CD4-positive, alpha-beta memory T cell (primary cell): ENCODE measurements at regions of chr12 and their contacts with region 1.

Region 1: GRCh38 chr12:53352331-53353256 is 16.4 kb upstream of the SP7 start:
- DNase-seq: peak; percentile 82 to 84 (median 84)
- H3K4me3 ChIP-seq: no peak overlapping the region
- H3K4me3 Mint-ChIP-seq: peak overlapping the region in 2 of 8 donors; percentile 1 to 7
- H3K27ac ChIP-seq: no peak overlapping the region
- H3K27ac Mint-ChIP-seq: peak overlapping the region in 4 of 7 donors; percentile 1 to 70 (median 26)
- H3K4me1 ChIP-seq: no peaks in the 10 kb centered on the region
- H3K4me1 Mint-ChIP-seq: peaks cover 4 to 7% (median 6%) of the 10 kb centered on the region in 4 donors
- H3K27me3 ChIP-seq: no peaks in the 10 kb centered on the region
- H3K27me3 Mint-ChIP-seq: no peaks in the 10 kb centered on the region

Region 2: GRCh38 chr12:53336181-53336681 is 16.4 kb before region 1 on chr12 and contains the start of gene SP7:
- CTCF ChIA-PET with region 1: interaction called, 11 read pairs
- POLR2A ChIA-PET with region 1: no interaction called
- intact Hi-C with region 1: no loop called
- DNase-seq: no peak
- H3K4me3 ChIP-seq: no peak within 1 kb of the TSS
- H3K4me3 Mint-ChIP-seq: peak within 1 kb of the TSS in 1 of 8 donors; percentile 6
- H3K27ac ChIP-seq: no peak within 1 kb of the TSS
- H3K27ac Mint-ChIP-seq: peak within 1 kb of the TSS in 1 of 7 donors; percentile 11
- H3K4me1 ChIP-seq: no peaks in the 10 kb centered on the region
- H3K4me1 Mint-ChIP-seq: peaks cover 0 to 7% (median 2%) of the 10 kb centered on the region in 4 donors
- H3K27me3 ChIP-seq: peaks cover 22% of the 10 kb centered on the region
- H3K27me3 Mint-ChIP-seq: peaks cover 21 to 52% of the 10 kb centered on the region in 2 donors
- total RNA-seq, gene SP7: not detected

Region 3: DNA sequence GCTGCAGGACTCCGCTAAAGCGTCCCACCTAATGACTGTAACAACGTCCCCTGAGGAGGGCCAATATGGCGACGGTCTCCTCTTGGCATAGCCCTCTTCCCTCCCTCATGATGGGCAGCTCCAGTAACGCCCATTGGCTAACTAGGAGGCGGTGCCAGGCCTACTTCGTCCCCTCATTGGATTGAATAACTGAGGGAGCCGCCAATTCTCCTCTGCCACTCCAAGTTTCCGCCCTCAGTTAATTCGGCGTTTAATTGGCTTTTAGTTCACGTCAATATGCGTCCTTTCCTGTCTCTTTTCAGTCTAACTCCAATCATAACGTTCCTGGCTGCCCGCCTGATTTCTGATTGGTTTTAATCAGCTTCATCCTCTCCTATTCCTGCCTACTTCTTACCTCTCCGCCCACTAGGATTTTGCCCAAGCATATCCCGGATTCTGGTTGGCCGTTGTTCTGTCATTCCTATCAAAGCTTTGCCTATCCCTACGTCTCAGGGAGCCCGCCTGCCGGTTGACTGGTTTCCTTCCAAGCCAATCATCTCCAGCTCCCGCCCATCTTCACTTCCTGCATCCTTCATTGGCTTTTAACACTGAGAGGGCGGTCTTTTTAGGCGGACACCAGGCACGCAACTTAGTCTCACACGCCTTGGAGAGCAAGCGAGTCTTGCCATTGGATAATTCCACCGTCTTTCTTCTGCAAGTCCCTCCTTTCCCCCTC is 27.0 kb after region 1 on chr12:
- CTCF ChIA-PET with region 1: interaction called, 63 read pairs
- POLR2A ChIA-PET with region 1: interaction called, 22 read pairs
- intact Hi-C with region 1: loop called (anchors 1 kb)
- DNase-seq: peak; percentile 99 to 100 (median 100)
- H3K4me3 ChIP-seq: peak overlapping the region; percentile 57 to 86
- H3K4me3 Mint-ChIP-seq: no peak overlapping the region
- H3K27ac ChIP-seq: peak overlapping the region; percentile 70
- H3K27ac Mint-ChIP-seq: no peak overlapping the region
- H3K4me1 ChIP-seq: peaks cover 46% of the 10 kb centered on the region
- H3K4me1 Mint-ChIP-seq: peaks cover 28 to 37% (median 34%) of the 10 kb centered on the region in 4 donors
- H3K27me3 ChIP-seq: no peaks in the 10 kb centered on the region
- H3K27me3 Mint-ChIP-seq: no peaks in the 10 kb centered on the region

Region 4: GRCh38 chr12:53414756-53415417 is 62.3 kb after region 1 on chr12:
- CTCF ChIA-PET with region 1: interaction called, 203 read pairs
- POLR2A ChIA-PET with region 1: no interaction called
- intact Hi-C with region 1: no loop called
- DNase-seq: no peak
- H3K4me3 ChIP-seq: no peak overlapping the region
- H3K4me3 Mint-ChIP-seq: no peak overlapping the region
- H3K27ac ChIP-seq: no peak overlapping the region
- H3K27ac Mint-ChIP-seq: peak overlapping the region; percentile 13 to 86 (median 48)
- H3K4me1 ChIP-seq: peaks cover 29% of the 10 kb centered on the region
- H3K4me1 Mint-ChIP-seq: peaks cover 26 to 43% (median 32%) of the 10 kb centered on the region in 4 donors
- H3K27me3 ChIP-seq: no peaks in the 10 kb centered on the region
- H3K27me3 Mint-ChIP-seq: no peaks in the 10 kb centered on the region

Region 5: GRCh38 chr12:53431187-53431586 is 78.6 kb after region 1 on chr12:
- CTCF ChIA-PET with region 1: interaction called, 24 read pairs
- POLR2A ChIA-PET with region 1: no interaction called
- intact Hi-C with region 1: no loop called
- DNase-seq: no peak
- H3K4me3 ChIP-seq: no peak overlapping the region
- H3K4me3 Mint-ChIP-seq: no peak overlapping the region
- H3K27ac ChIP-seq: no peak overlapping the region
- H3K27ac Mint-ChIP-seq: peak overlapping the region in 1 of 7 donors; percentile 19
- H3K4me1 ChIP-seq: no peaks in the 10 kb centered on the region
- H3K4me1 Mint-ChIP-seq: peaks cover 0 to 1% (median 0%) of the 10 kb centered on the region in 4 donors
- H3K27me3 ChIP-seq: no peaks in the 10 kb centered on the region
- H3K27me3 Mint-ChIP-seq: no peaks in the 10 kb centered on the region

Region 6: GRCh38 chr12:53530920-53531319 is 178.3 kb after region 1 on chr12:
- CTCF ChIA-PET with region 1: no interaction called
- POLR2A ChIA-PET with region 1: no interaction called
- intact Hi-C with region 1: no loop called
- DNase-seq: no peak
- H3K4me3 ChIP-seq: no peak overlapping the region
- H3K4me3 Mint-ChIP-seq: no peak overlapping the region
- H3K27ac ChIP-seq: no peak overlapping the region
- H3K27ac Mint-ChIP-seq: no peak overlapping the region
- H3K4me1 ChIP-seq: no peaks in the 10 kb centered on the region
- H3K4me1 Mint-ChIP-seq: peaks cover 0 to 1% (median 0%) of the 10 kb centered on the region in 4 donors
- H3K27me3 ChIP-seq: no peaks in the 10 kb centered on the region
- H3K27me3 Mint-ChIP-seq: no peaks in the 10 kb centered on the region

Region 7: GRCh38 chr12:53862831-53863230 is 510.2 kb after region 1 on chr12:
- CTCF ChIA-PET with region 1: no interaction called
- POLR2A ChIA-PET with region 1: no interaction called
- intact Hi-C with region 1: no loop called
- DNase-seq: no peak
- H3K4me3 ChIP-seq: no peak overlapping the region
- H3K4me3 Mint-ChIP-seq: no peak overlapping the region
- H3K27ac ChIP-seq: no peak overlapping the region
- H3K27ac Mint-ChIP-seq: no peak overlapping the region
- H3K4me1 ChIP-seq: no peaks in the 10 kb centered on the region
- H3K4me1 Mint-ChIP-seq: no peaks in the 10 kb centered on the region
- H3K27me3 ChIP-seq: peaks cover 5% of the 10 kb centered on the region
- H3K27me3 Mint-ChIP-seq: peaks cover 9 to 28% of the 10 kb centered on the region in 2 donors